Panc1 (cell line): ENCODE measurements at regions of chr9 and their contacts with region 1.

Region 1: GRCh38 chr9:21688108-21689102 is 114.0 kb upstream of the MTAP start:
- DNase-seq: peak; percentile 75
- ATAC-seq: peak; percentile 31
- H3K4me3 ChIP-seq: peak overlapping the region; percentile 29 to 36
- H3K27ac ChIP-seq: peak overlapping the region; percentile 95
- H3K4me1 ChIP-seq: peaks cover 76% of the 10 kb centered on the region
- H3K27me3 ChIP-seq: no peaks in the 10 kb centered on the region
- CTCF ChIP-seq: no peak

Region 2: GRCh38 chr9:21591221-21592062 is 97.0 kb before region 1 on chr9:
- CTCF ChIA-PET with region 1: no interaction called
- POLR2A ChIA-PET with region 1: no interaction called
- in situ Hi-C with region 1: no loop called
- intact Hi-C with region 1: loop called (anchors 5 kb)
- DNase-seq: peak; percentile 98
- ATAC-seq: peak; percentile 95
- H3K4me3 ChIP-seq: peak overlapping the region; percentile 42 to 56
- H3K27ac ChIP-seq: peak overlapping the region; percentile 100
- H3K4me1 ChIP-seq: peaks cover 64% of the 10 kb centered on the region
- H3K27me3 ChIP-seq: no peaks in the 10 kb centered on the region
- CTCF ChIP-seq: no peak